ENCODE measurements at regions of chr10 and their contacts with region 1.

Region 1: GRCh38 chr10:91632671-91633550 is at the start of gene PPP1R3C:
- DNase-seq: peak; percentile 44
- ATAC-seq: peak; percentile 73
- H3K4me3 ChIP-seq: peak within 1 kb of the TSS in 4 of 5 experiments; percentile 25 to 52 (median 36)
- H3K4me3 Mint-ChIP-seq: peak within 1 kb of the TSS; percentile 75
- H3K27ac ChIP-seq: no peak within 1 kb of the TSS
- H3K27ac Mint-ChIP-seq: no peak within 1 kb of the TSS
- H3K4me1 ChIP-seq: peaks cover 12 to 16% of the 10 kb centered on the region in 2 donors
- H3K4me1 Mint-ChIP-seq: peaks cover 17% of the 10 kb centered on the region
- H3K27me3 ChIP-seq: peaks cover 0 to 36% (median 16%) of the 10 kb centered on the region in 4 experiments
- H3K27me3 Mint-ChIP-seq: peaks cover 66% of the 10 kb centered on the region
- CTCF ChIP-seq: no peak
- total RNA-seq, gene PPP1R3C: not detected in 2 replicates

Region 2: DNA sequence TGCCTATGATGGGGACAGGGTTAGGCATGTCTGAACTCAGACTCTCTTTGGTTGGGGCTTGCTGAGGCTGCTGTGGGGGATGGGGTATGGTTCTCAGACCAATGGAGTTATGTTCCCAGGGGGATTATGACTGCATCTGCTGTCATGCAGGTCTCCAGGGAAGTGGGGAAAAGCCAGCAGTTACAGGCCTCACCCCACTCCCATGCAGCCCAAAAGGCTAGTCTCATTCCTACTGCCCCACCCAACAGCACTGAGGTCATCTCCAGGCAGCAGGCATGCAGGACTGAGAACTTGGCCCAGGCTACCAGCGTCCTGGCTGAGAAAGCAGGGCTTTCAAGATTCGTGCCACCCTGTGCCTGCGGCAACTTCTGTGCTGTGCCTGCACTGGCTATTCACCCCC is 1148.4 kb before region 1 on chr10:
- CTCF ChIA-PET with region 1: no interaction called
- POLR2A ChIA-PET with region 1: no interaction called
- intact Hi-C with region 1: no loop called
- DNase-seq: no peak
- ATAC-seq: no peak
- H3K4me3 ChIP-seq: no peak overlapping the region
- H3K4me3 Mint-ChIP-seq: no peak overlapping the region
- H3K27ac ChIP-seq: no peak overlapping the region
- H3K27ac Mint-ChIP-seq: no peak overlapping the region
- H3K4me1 ChIP-seq: no peaks in the 10 kb centered on the region
- H3K4me1 Mint-ChIP-seq: no peaks in the 10 kb centered on the region
- H3K27me3 ChIP-seq: peaks cover 0 to 3% (median 1%) of the 10 kb centered on the region in 4 experiments
- H3K27me3 Mint-ChIP-seq: peaks cover 13% of the 10 kb centered on the region
- CTCF ChIP-seq: no peak

Region 3: GRCh38 chr10:90885176-90885575 is 747.7 kb before region 1 on chr10:
- CTCF ChIA-PET with region 1: interaction called, 8 read pairs
- POLR2A ChIA-PET with region 1: no interaction called
- intact Hi-C with region 1: loop called (anchors 2 kb)
- DNase-seq: no peak
- ATAC-seq: no peak
- H3K4me3 ChIP-seq: no peak overlapping the region
- H3K4me3 Mint-ChIP-seq: no peak overlapping the region
- H3K27ac ChIP-seq: no peak overlapping the region
- H3K27ac Mint-ChIP-seq: no peak overlapping the region
- H3K4me1 ChIP-seq: no peaks in the 10 kb centered on the region
- H3K4me1 Mint-ChIP-seq: no peaks in the 10 kb centered on the region
- H3K27me3 ChIP-seq: no peaks in the 10 kb centered on the region
- H3K27me3 Mint-ChIP-seq: no peaks in the 10 kb centered on the region
- CTCF ChIP-seq: no peak

Region 4: GRCh38 chr10:90912174-90912573 is 720.7 kb before region 1 on chr10:
- CTCF ChIA-PET with region 1: interaction called, 30 read pairs
- POLR2A ChIA-PET with region 1: no interaction called
- intact Hi-C with region 1: loop called (anchors 10 kb)
- DNase-seq: no peak
- ATAC-seq: no peak
- H3K4me3 ChIP-seq: no peak overlapping the region
- H3K4me3 Mint-ChIP-seq: no peak overlapping the region
- H3K27ac ChIP-seq: no peak overlapping the region
- H3K27ac Mint-ChIP-seq: no peak overlapping the region
- H3K4me1 ChIP-seq: no peaks in the 10 kb centered on the region
- H3K4me1 Mint-ChIP-seq: peaks cover 2% of the 10 kb centered on the region
- H3K27me3 ChIP-seq: no peaks in the 10 kb centered on the region
- H3K27me3 Mint-ChIP-seq: no peaks in the 10 kb centered on the region
- CTCF ChIP-seq: no peak

Region 5: GRCh38 chr10:91298224-91298871 is 334.6 kb before region 1 on chr10:
- CTCF ChIA-PET with region 1: interaction called, 36 read pairs
- POLR2A ChIA-PET with region 1: no interaction called
- intact Hi-C with region 1: no loop called
- DNase-seq: peak; percentile 85
- ATAC-seq: peak; percentile 94
- H3K4me3 ChIP-seq: peak overlapping the region in 4 of 5 experiments; percentile 14 to 54 (median 48)
- H3K4me3 Mint-ChIP-seq: peak overlapping the region; percentile 75
- H3K27ac ChIP-seq: no peak overlapping the region
- H3K27ac Mint-ChIP-seq: no peak overlapping the region
- H3K4me1 ChIP-seq: peaks cover 11% of the 10 kb centered on the region in 2 donors
- H3K4me1 Mint-ChIP-seq: peaks cover 9% of the 10 kb centered on the region
- H3K27me3 ChIP-seq: no peaks in the 10 kb centered on the region
- H3K27me3 Mint-ChIP-seq: peaks cover 21% of the 10 kb centered on the region
- CTCF ChIP-seq: peak; percentile 93

Region 6: DNA sequence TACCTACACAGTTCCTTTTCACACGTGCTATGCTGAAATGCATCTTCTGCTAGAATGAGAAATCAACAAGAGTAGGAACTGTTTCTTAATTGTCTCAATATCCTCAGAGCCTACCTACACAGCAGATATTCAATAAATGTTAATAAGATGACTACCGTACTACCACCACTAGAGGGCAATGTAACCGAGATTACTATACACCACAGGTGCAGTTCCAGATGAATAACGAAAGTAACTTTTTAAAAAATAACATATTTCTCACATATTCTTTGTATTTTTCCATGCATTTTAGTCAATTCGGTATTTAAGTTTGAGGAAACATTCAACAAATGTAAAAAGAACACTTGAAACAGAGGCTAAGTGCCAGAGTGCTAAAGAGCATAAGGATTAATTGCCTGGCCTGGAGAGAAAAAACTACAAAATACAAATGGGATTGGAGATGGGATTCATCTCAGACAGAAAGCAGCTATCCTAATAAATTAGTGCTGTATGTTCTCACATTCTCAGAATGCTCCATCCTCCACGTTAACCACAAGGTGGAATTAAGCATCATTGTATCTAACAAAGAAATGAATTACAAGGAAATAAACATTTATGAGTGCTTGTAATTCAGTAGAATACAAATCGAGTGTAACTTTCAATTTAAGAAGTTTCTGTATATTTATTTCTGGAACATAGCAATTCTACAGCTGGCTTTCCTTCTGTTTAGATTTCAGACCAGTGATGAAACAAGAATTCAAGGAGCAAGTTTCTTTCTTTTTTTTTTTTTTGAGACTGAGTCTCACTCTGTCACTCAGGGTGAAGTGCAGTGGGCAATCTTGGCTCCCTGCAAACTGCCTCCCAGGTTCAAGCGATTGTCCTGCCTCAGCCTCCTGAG is 243.0 kb before region 1 on chr10:
- CTCF ChIA-PET with region 1: interaction called, 34 read pairs
- POLR2A ChIA-PET with region 1: no interaction called
- intact Hi-C with region 1: loop called (anchors 1 kb)
- DNase-seq: peak; percentile 78
- ATAC-seq: peak; percentile 85
- H3K4me3 ChIP-seq: no peak overlapping the region
- H3K4me3 Mint-ChIP-seq: no peak overlapping the region
- H3K27ac ChIP-seq: no peak overlapping the region
- H3K27ac Mint-ChIP-seq: no peak overlapping the region
- H3K4me1 ChIP-seq: no peaks in the 10 kb centered on the region
- H3K4me1 Mint-ChIP-seq: peaks cover 3% of the 10 kb centered on the region
- H3K27me3 ChIP-seq: peaks cover 0 to 3% (median 0%) of the 10 kb centered on the region in 4 experiments
- H3K27me3 Mint-ChIP-seq: peaks cover 33% of the 10 kb centered on the region
- CTCF ChIP-seq: peak; percentile 84

Region 7: GRCh38 chr10:91520661-91521060 is 112.2 kb before region 1 on chr10:
- CTCF ChIA-PET with region 1: no interaction called
- POLR2A ChIA-PET with region 1: no interaction called
- intact Hi-C with region 1: no loop called
- DNase-seq: no peak
- ATAC-seq: no peak
- H3K4me3 ChIP-seq: no peak overlapping the region
- H3K4me3 Mint-ChIP-seq: no peak overlapping the region
- H3K27ac ChIP-seq: no peak overlapping the region
- H3K27ac Mint-ChIP-seq: no peak overlapping the region
- H3K4me1 ChIP-seq: no peaks in the 10 kb centered on the region
- H3K4me1 Mint-ChIP-seq: no peaks in the 10 kb centered on the region
- H3K27me3 ChIP-seq: no peaks in the 10 kb centered on the region
- H3K27me3 Mint-ChIP-seq: peaks cover 6% of the 10 kb centered on the region
- CTCF ChIP-seq: no peak

Region 8: DNA sequence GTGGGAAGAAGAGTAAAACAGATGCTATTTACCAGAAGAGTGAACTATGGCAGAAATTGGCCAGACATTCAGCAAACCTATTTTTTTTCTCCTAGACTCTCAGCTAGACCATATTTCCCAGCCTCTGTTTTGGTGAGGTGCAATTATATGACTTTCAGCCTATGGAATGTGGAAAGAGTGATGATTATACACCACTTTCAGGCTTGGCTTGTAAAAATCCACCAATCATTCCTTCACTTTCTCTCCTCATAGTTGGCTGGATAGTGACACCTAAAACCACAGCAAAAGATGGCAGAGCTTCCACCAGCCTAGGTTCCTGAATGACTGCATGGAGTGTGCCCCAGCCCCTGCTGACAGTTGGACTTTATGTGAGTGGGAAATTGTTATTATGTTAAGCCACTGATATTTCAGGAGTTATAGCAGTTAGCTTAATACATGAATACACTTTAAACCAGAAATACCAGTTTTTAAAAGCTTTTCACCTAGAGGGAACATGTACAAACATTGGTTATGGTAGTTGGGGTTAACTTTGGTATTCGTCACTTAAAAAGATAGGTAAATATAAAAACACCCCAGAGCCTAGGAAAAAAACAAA is 146.2 kb after region 1 on chr10:
- CTCF ChIA-PET with region 1: no interaction called
- POLR2A ChIA-PET with region 1: no interaction called
- intact Hi-C with region 1: no loop called
- DNase-seq: no peak
- ATAC-seq: no peak
- H3K4me3 ChIP-seq: no peak overlapping the region
- H3K4me3 Mint-ChIP-seq: no peak overlapping the region
- H3K27ac ChIP-seq: no peak overlapping the region
- H3K27ac Mint-ChIP-seq: no peak overlapping the region
- H3K4me1 ChIP-seq: no peaks in the 10 kb centered on the region
- H3K4me1 Mint-ChIP-seq: no peaks in the 10 kb centered on the region
- H3K27me3 ChIP-seq: peaks cover 0 to 5% (median 4%) of the 10 kb centered on the region in 4 experiments
- H3K27me3 Mint-ChIP-seq: no peaks in the 10 kb centered on the region
- CTCF ChIP-seq: no peak